ENCODE measurements at regions of chr3 and their contacts with region 1.

Region 1: DNA sequence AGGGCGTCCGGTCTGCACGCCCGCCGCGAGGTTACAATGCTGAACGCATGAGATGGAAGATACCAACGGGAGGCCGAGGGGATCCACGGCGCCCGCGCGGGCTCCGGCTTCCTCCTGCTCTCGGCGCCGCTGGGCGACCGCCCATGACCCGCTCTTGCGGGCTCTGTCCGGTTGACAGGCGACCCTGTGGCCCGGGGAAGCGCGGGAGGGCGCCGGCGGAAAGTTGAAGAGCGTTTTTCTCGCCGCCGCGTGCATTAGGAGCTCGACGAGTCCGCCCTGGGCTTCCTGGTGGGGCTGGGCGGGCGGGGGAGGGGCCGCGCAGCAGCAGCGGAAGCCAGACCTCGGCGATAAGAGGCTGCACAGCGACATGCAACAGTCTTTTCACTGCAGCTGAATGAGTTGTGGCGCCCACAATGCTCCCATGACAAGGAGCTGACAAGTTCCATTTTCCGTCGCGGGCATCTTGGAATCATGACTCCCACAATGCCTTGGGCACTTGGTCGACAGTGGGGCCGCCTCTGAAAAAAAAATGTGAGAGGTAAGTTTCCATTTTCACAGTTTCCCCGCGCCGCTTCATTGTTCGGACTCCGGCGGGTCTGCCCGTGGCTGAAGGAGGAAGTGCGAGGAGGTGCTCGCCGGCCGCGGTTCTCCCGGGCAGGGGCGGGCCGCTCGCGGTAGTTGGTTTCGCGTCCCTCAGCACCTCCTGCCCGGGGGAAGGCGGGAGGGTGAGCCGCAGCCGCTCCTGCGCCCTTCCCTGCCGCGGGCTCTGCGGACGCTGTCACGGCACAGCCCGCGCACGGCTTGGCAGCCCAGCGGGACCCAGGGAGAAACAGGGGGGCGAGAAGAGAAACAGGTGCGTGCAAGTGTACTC is at the start of gene MBNL1:
- DNase-seq: peak; percentile 95
- H3K4me3 Mint-ChIP-seq: peak within 1 kb of the TSS; percentile 83
- H3K27ac Mint-ChIP-seq: peak within 1 kb of the TSS; percentile 94
- H3K4me1 Mint-ChIP-seq: peaks cover 47% of the 10 kb centered on the region
- H3K27me3 Mint-ChIP-seq: no peaks in the 10 kb centered on the region
- total RNA-seq, gene MBNL1: 296 and 298 TPM in 2 replicates

Region 2: GRCh38 chr3:152241142-152242017 is 27.4 kb before region 1 on chr3:
- intact Hi-C with region 1: loop called (anchors 1 kb)
- DNase-seq: peak; percentile 71
- H3K4me3 Mint-ChIP-seq: peak overlapping the region; percentile 62
- H3K27ac Mint-ChIP-seq: peak overlapping the region; percentile 89
- H3K4me1 Mint-ChIP-seq: peaks cover 48% of the 10 kb centered on the region
- H3K27me3 Mint-ChIP-seq: no peaks in the 10 kb centered on the region

Region 3: GRCh38 chr3:152281133-152281713 is 12.4 kb after region 1 on chr3:
- intact Hi-C with region 1: loop called (anchors 1 kb)
- DNase-seq: peak; percentile 63
- H3K4me3 Mint-ChIP-seq: peak overlapping the region; percentile 34
- H3K27ac Mint-ChIP-seq: peak overlapping the region; percentile 81
- H3K4me1 Mint-ChIP-seq: peaks cover 70% of the 10 kb centered on the region
- H3K27me3 Mint-ChIP-seq: no peaks in the 10 kb centered on the region

Region 4: DNA sequence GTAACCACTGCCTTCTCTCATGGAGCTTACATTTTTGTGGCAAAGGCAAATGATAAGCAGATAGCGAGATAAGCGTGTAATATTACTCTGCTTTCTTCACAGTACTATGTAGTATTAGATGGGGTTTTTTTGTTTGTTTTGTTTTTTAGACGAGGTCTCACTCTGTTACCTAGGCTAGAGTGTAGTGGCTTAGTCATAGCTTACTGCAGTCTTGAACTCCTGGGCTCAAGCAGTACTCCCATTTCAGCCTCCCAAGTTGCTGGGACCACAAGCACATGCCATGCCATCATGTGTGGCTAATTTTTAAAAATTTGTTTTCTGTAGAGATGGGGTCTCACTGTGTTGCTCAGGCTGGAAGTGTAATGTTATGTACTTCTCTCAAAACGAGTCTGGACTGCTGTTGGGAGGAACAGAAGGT is 22.9 kb after region 1 on chr3:
- intact Hi-C with region 1: no loop called
- DNase-seq: peak; percentile 57
- H3K4me3 Mint-ChIP-seq: peak overlapping the region; percentile 23
- H3K27ac Mint-ChIP-seq: peak overlapping the region; percentile 80
- H3K4me1 Mint-ChIP-seq: peaks cover 54% of the 10 kb centered on the region
- H3K27me3 Mint-ChIP-seq: no peaks in the 10 kb centered on the region

Region 5: DNA sequence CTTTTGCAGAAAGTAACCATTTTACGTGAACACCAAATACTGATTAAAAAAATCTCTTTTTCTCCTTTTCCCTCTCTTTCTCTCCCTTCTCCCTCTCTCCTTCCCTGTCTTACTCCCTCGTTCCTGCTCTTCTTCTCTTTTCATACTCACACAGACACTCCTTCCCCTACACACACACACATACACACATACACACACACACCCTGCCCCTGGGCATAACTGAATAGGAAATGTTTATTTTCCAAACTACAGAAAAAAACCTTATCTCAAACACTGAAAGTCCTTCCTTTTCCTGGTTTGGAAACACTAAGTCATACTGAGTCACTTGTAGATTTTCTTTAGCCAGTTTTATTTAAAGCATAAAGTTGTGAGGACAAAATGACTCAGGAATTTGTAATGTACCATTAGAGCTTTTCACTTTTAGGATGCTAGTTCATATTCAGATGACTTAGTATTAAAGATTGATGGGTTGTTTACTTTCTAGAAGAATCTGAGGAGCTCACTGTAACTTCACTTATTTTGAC is 62.3 kb after region 1 on chr3:
- intact Hi-C with region 1: loop called (anchors 2 kb)
- DNase-seq: no peak
- H3K4me3 Mint-ChIP-seq: peak overlapping the region; percentile 36
- H3K27ac Mint-ChIP-seq: peak overlapping the region; percentile 82
- H3K4me1 Mint-ChIP-seq: peaks cover 63% of the 10 kb centered on the region
- H3K27me3 Mint-ChIP-seq: no peaks in the 10 kb centered on the region

Region 6: GRCh38 chr3:152688313-152688712 is 419.5 kb after region 1 on chr3:
- intact Hi-C with region 1: loop called (anchors 5 kb)
- DNase-seq: no peak
- H3K4me3 Mint-ChIP-seq: no peak overlapping the region
- H3K27ac Mint-ChIP-seq: no peak overlapping the region
- H3K4me1 Mint-ChIP-seq: peaks cover 2% of the 10 kb centered on the region
- H3K27me3 Mint-ChIP-seq: no peaks in the 10 kb centered on the region

Measured in activated CD4-positive, alpha-beta T cell treated with anti-CD3 and anti-CD28 coated beads, Interleukin-2, amount 10 ng/mL, durations not matched to agents 24 days and 14 days (primary cell).